ENCODE measurements at regions of chr18 and their contacts with region 1.

Region 1: DNA sequence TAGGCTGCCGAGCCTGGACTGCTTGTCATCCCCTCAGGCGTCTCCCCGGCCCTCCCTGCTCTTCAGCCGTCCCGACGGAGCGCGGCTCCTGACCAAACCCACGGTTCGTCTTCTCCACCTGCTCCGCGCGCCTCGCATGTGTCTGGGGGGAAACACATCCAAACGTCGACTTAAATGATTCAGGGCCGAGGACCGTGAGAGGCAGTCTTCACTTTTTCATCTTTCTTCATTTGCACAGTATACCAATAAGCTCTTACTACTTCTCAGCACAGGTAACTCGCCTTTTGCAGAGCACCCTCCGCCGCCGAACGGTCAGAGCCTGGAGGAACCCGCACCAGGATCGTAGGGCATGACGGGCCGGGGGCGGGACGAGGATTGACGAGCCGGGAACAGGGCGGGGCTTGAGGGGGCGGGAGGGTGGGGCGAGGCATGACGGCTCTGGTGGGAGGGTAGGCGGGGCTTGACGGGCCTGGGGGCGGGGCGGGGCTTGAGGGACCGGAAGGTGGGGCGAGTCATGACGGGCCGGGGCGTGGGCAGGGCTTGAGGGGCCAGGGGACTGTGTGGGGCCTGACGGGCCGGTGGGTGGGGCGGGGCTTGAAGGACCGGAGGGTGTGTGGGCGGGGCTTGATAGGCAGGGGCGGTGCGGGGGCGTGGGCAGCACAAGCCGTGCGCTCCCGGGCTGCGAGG is at the start of gene SEH1L:
- DNase-seq: peak; percentile 99 to 100
- ATAC-seq: peak; percentile 84 to 89
- H3K4me3 ChIP-seq: peak within 1 kb of the TSS; percentile 80 to 97 (median 92)
- H3K27ac ChIP-seq: peak within 1 kb of the TSS; percentile 96 to 100 (median 99)
- H3K4me1 ChIP-seq: peaks cover 17 to 19% of the 10 kb centered on the region in 2 donors
- H3K27me3 ChIP-seq: no peaks in the 10 kb centered on the region
- CTCF ChIP-seq: no peak
- POLR2A ChIP-seq: no peak
- total RNA-seq, gene SEH1L: 19.8 to 29.9 (median 28.2) TPM

Region 2: DNA sequence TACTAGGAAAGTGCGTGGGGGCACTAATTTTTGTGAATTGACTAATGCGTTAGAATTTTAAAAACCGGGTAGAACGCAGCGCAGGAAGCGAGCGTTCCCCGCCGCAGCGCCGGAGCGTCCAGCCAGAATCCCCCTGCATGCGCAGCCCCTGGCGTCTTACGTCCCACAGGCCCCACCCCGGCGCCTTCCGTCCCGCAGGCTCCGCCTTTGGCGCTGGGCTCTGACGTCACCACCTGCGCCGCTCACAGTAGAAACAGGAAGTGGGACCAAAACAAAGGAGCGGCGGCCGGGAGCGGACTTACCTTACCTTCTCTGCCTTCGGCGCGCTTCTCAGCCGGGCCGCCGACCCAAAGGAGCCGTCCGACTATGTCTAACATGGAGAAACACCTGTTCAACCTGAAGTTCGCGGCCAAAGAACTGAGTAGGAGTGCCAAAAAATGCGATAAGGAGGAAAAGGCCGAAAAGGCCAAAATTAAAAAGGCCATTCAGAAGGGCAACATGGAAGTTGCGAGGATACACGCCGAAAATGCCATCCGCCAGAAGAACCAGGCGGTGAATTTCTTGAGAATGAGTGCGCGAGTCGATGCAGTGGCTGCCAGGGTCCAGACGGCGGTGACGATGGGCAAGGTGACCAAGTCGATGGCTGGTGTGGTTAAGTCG is 1096.2 kb before region 1 on chr18 and contains the start of gene CHMP1B:
- in situ Hi-C with region 1: no loop called
- intact Hi-C with region 1: loop called (anchors 5 kb)
- DNase-seq: peak; percentile 97 to 99
- ATAC-seq: peak; percentile 59 to 68
- H3K4me3 ChIP-seq: peak within 1 kb of the TSS; percentile 72 to 92 (median 84)
- H3K27ac ChIP-seq: peak within 1 kb of the TSS; percentile 90 to 99 (median 96)
- H3K4me1 ChIP-seq: peaks cover 25 to 38% of the 10 kb centered on the region in 2 donors
- H3K27me3 ChIP-seq: no peaks in the 10 kb centered on the region
- CTCF ChIP-seq: peak in 1 of 5 experiments; percentile 21
- POLR2A ChIP-seq: peak; percentile 100
- total RNA-seq, gene CHMP1B: 347 to 634 (median 407) TPM

Region 3: DNA sequence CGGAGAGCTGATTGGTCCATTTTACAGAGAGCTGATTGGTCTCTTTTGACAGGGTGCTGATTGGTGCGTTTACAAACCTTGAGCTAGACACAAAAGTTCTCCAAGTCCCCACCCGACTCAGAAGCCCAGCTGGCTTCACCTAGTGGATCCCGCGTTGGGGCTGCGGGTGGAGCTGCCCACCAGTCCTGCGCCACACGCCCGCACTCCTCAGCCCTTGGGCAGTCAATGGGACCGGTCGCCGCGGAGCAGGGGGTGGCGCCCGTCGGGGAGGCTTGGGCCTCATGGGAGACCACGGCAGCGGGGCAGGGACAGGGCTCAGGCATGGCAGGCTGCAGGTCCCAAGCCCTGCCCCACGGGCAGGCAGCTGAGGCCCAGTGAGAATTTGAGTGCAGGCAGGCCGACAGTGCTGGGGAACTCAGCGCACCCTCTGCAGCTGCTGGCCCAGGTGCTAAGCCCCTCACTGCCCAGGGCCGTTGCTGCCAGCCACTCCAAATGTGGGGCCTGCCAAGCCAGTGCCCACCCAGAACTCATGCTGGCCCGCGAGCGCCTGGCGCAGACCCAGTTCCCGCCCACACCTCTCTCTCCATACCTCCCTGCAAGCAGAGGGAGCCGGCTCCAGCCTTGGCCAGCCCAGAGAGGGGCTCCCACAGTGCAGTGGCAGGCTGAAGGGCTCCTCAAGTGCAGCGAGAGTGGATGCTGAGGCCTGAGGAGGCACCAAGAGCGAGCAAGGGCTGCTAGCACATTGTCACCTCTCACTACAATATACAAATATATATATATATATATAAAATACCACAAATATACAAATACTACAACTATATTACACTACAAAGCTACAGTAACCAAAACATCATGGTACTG is 390.3 kb before region 1 on chr18:
- in situ Hi-C with region 1: no loop called
- intact Hi-C with region 1: no loop called
- DNase-seq: no peak
- ATAC-seq: no peak
- H3K4me3 ChIP-seq: no peak overlapping the region
- H3K27ac ChIP-seq: no peak overlapping the region
- H3K4me1 ChIP-seq: peaks cover 6 to 22% of the 10 kb centered on the region in 2 donors
- H3K27me3 ChIP-seq: no peaks in the 10 kb centered on the region
- CTCF ChIP-seq: no peak
- POLR2A ChIP-seq: no peak

Region 4: GRCh38 chr18:12657684-12658425 is 289.6 kb before region 1 on chr18 and contains the start of gene SPIRE1:
- in situ Hi-C with region 1: no loop called
- intact Hi-C with region 1: loop called (anchors 5 kb)
- DNase-seq: peak; percentile 67 to 75
- ATAC-seq: peak; percentile 81 to 88
- H3K4me3 ChIP-seq: peak within 1 kb of the TSS; percentile 72 to 96 (median 80)
- H3K27ac ChIP-seq: peak within 1 kb of the TSS; percentile 88 to 99 (median 94)
- H3K4me1 ChIP-seq: peaks cover 1 to 18% of the 10 kb centered on the region in 2 donors
- H3K27me3 ChIP-seq: no peaks in the 10 kb centered on the region
- CTCF ChIP-seq: peak in 1 of 5 experiments; percentile 25
- POLR2A ChIP-seq: peak; percentile 79 to 84
- total RNA-seq, gene SPIRE1: 48.3 to 82.7 (median 55.1) TPM

Region 5: GRCh38 chr18:12726774-12727550 is 220.5 kb before region 1 on chr18:
- in situ Hi-C with region 1: loop called in 1 of 4 experiments (anchors 5 kb)
- intact Hi-C with region 1: no loop called
- DNase-seq: peak; percentile 14 to 25
- ATAC-seq: peak in 1 of 2 donors; percentile 58
- H3K4me3 ChIP-seq: no peak overlapping the region
- H3K27ac ChIP-seq: no peak overlapping the region
- H3K4me1 ChIP-seq: no peaks in the 10 kb centered on the region
- H3K27me3 ChIP-seq: no peaks in the 10 kb centered on the region
- CTCF ChIP-seq: peak; percentile 85 to 90 (median 89)
- POLR2A ChIP-seq: no peak

Region 6: GRCh38 chr18:12990967-12991838 is 43.7 kb after region 1 on chr18 and contains the start of gene CEP192:
- in situ Hi-C with region 1: no loop called
- intact Hi-C with region 1: loop called (anchors 1 kb)
- DNase-seq: peak; percentile 98
- ATAC-seq: peak; percentile 97
- H3K4me3 ChIP-seq: peak within 1 kb of the TSS; percentile 81 to 95 (median 90)
- H3K27ac ChIP-seq: peak within 1 kb of the TSS; percentile 87 to 93 (median 92)
- H3K4me1 ChIP-seq: peaks cover 33 to 47% of the 10 kb centered on the region in 2 donors
- H3K27me3 ChIP-seq: no peaks in the 10 kb centered on the region
- CTCF ChIP-seq: peak in 1 of 5 experiments; percentile 10
- POLR2A ChIP-seq: peak; percentile 84 to 94
- total RNA-seq, gene CEP192: 6.8 to 8.3 (median 7.3) TPM